ENCODE measurements at regions of chrX and their contacts with region 1.

Region 1: DNA sequence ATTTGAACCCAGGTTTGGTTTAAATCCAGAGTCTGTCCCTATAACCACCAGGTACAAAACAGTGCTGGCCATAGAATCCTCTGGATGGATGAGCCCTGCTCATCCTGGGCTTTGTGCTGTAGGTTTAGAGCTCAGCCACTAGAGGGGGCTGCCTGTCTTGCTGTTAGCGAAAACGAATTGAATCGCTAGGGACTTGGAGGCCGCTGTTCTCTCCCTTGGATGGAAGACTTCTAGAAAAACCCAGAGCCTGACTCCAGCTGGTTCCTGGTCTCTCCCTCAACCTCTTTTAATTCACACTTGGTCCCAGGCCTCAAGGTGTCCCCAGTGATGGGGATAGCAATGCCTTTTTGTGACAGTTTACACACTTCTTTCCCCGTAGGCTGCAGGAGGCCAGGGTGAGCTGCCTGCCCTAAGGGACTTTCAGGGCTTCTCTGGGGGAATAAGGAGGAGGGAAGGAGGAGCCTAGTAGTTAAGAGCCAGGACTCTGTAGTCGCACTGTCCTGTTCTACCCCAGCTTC is 8.7 kb downstream of the RIPPLY1 start:
- DNase-seq: peak; percentile 52
- ATAC-seq: peak; percentile 89
- H3K4me3 Mint-ChIP-seq: no peak overlapping the region
- H3K27ac Mint-ChIP-seq: no peak overlapping the region
- H3K4me1 Mint-ChIP-seq: peaks cover 10% of the 10 kb centered on the region
- H3K27me3 Mint-ChIP-seq: no peaks in the 10 kb centered on the region
- CTCF ChIP-seq: peak; percentile 57

Region 2: DNA sequence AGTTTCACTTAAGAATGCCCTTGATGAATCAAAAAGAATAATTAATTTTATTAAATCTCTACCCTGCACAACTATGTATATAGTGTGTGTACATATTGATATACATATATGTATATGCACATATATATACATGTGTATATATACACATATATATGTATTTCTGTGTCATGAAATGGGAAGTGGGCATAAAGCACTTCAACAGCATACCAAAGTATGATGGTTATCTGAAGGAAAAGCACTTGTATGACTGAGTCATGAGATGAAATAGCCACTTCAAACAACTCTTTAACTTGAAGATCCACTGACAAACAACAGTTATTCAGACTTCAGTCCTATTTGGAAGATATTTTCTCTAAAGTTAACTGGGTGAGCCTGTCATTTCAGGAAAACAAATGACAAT is 151.6 kb before region 1 on chrX:
- CTCF ChIA-PET with region 1: no interaction called
- POLR2A ChIA-PET with region 1: no interaction called
- DNase-seq: no peak
- ATAC-seq: no peak
- H3K4me3 Mint-ChIP-seq: no peak overlapping the region
- H3K27ac Mint-ChIP-seq: no peak overlapping the region
- H3K4me1 Mint-ChIP-seq: no peaks in the 10 kb centered on the region
- H3K27me3 Mint-ChIP-seq: no peaks in the 10 kb centered on the region
- CTCF ChIP-seq: no peak

Region 3: DNA sequence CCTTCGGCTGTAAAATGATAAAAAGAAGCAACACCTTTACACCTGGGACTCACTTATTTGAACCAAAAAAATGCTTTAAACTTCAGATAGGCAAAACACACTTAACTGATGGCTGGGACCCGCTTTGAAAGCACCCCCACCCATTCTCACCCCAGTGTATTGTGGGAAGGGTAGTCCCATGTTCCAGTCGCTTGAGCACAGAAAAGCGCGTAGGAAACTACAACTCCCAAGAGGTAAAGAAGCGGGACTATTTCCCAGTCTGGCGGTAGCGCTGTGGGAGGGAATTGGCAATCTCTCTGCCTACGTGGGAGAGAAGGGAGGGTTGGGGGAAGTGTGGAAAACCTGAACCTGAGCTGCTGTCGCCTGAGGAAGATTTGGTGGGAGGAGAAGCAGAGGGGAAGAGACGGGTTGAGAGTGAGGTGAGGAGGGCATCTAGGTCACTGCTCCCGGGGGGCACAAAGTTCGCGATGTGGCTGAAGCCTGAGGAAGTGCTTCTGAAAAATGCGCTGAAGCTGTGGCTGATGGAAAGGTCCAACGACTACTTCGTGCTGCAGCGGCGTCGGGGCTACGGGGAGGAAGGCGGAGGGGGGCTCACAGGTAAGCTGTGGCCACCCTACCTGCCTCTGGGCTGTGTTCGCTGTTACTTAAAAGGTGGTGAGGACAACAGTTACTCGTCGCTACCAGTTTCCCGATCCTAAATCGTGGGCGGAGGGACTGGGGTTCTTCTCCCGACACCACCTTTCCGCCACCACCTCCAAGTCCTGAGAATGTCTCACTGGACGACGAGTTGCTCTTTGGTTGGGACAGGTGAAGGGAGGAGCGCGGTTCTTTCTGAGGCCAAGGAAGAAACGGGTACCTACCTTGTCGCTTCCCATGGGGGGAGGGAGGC is 91.8 kb before region 1 on chrX and contains the start of gene TBC1D8B:
- CTCF ChIA-PET with region 1: no interaction called
- POLR2A ChIA-PET with region 1: no interaction called
- DNase-seq: peak; percentile 70
- ATAC-seq: peak; percentile 96
- H3K4me3 Mint-ChIP-seq: peak within 1 kb of the TSS; percentile 88
- H3K27ac Mint-ChIP-seq: peak within 1 kb of the TSS; percentile 83
- H3K4me1 Mint-ChIP-seq: peaks cover 15% of the 10 kb centered on the region
- H3K27me3 Mint-ChIP-seq: peaks cover 27% of the 10 kb centered on the region
- CTCF ChIP-seq: no peak
- total RNA-seq, gene TBC1D8B: 5.8 to 6.3 TPM (median 6.3 TPM) in 3 replicates

Region 4: DNA sequence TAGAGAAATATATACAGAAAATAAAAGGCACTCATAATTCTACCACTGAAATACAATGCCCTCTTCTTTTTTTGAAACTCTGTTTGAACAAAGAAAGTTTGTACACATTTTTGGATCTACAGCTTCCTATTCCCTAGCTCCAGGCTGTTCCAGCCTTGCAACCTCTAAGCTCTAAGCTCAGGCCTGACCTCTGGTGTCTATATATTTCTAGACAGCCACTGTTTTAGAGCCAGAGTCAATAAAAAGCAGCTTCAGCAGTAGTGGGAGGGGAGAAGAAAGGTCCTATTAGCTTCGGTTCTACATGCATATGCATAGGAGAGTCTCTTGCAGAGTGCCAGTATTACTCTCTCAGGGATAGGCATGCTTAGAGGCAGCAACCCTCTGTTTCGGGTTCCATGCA is 65.5 kb after region 1 on chrX:
- CTCF ChIA-PET with region 1: interaction called, 54 read pairs
- POLR2A ChIA-PET with region 1: no interaction called
- DNase-seq: no peak
- ATAC-seq: peak; percentile 89
- H3K4me3 Mint-ChIP-seq: no peak overlapping the region
- H3K27ac Mint-ChIP-seq: no peak overlapping the region
- H3K4me1 Mint-ChIP-seq: no peaks in the 10 kb centered on the region
- H3K27me3 Mint-ChIP-seq: no peaks in the 10 kb centered on the region
- CTCF ChIP-seq: no peak

Region 5: GRCh38 chrX:107672955-107673378 is 778.5 kb after region 1 on chrX:
- CTCF ChIA-PET with region 1: no interaction called
- POLR2A ChIA-PET with region 1: no interaction called
- DNase-seq: peak; percentile 54
- ATAC-seq: peak; percentile 65
- H3K4me3 Mint-ChIP-seq: 0 out of 2 replicates have a peak overlapping the region, but pooled peaks have one; percentile 24
- H3K27ac Mint-ChIP-seq: no peak overlapping the region
- H3K4me1 Mint-ChIP-seq: peaks cover 33% of the 10 kb centered on the region
- H3K27me3 Mint-ChIP-seq: 0 out of 2 replicates have a peak, but pooled peaks cover under 1% of the 10 kb centered on the region
- CTCF ChIP-seq: peak; percentile 43; the same call in 1 of the 2 replicates